ENCODE measurements at regions of chr3 and their contacts with region 1.

Region 1: GRCh38 chr3:196739671-196740480 is at the start of gene PAK2:
- DNase-seq: peak; percentile 72 to 93
- H3K4me3 ChIP-seq: peak within 1 kb of the TSS; percentile 85
- H3K27ac ChIP-seq: peak within 1 kb of the TSS; percentile 80
- H3K4me1 ChIP-seq: peaks cover 11% of the 10 kb centered on the region
- H3K27me3 ChIP-seq: no peaks in the 10 kb centered on the region
- CTCF ChIP-seq: no peak
- total RNA-seq, gene PAK2: 78.6 and 113 TPM in 2 replicates

Region 2: DNA sequence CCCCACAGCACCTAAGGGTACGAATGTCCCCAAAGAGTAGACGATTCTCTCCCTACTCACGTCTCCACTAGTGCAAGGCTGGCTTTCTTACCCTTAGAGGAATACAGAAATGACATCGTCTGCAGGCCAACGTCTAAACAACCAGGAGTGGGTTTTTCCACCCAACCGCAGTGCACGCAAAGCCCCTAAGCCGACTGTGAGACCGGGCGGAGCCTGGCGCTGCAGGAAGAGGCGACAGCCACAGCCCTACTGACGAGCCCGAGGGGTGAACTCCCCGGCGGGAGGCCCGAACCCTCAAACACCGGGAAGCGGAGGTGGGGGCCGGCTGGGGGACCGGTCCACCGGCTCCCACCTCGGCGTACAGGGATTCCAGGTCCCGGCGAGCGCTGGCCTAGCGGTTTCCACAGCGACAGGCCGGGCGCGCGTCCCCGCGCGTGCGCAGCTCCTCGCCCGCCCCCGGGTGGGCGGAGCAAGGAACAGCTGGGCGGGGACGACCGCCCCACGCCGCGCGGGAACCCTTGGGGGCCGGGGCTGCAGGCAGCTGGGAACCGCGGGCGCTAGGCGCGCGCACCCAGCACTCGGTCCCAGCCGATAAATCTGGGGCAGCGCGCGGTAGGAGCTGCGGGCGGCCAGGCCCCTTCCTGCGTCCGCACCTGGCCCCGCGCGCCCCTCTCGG is 27.9 kb before region 1 on chr3 and contains the starts of genes CEP19 and PIGX:
- CTCF ChIA-PET with region 1: interaction called, 12 read pairs
- POLR2A ChIA-PET with region 1: interaction called, 4 read pairs
- intact Hi-C with region 1: no loop called
- DNase-seq: peak; percentile 67 to 94
- H3K4me3 ChIP-seq: peak within 1 kb of the TSS; percentile 93
- H3K27ac ChIP-seq: peak within 1 kb of the TSS; percentile 43
- H3K4me1 ChIP-seq: peaks cover 18% of the 10 kb centered on the region
- H3K27me3 ChIP-seq: no peaks in the 10 kb centered on the region
- CTCF ChIP-seq: no peak
- total RNA-seq, gene CEP19: 3.4 and 5.5 TPM in 2 replicates
- total RNA-seq, gene PIGX: 47.6 and 52.9 TPM in 2 replicates

Region 3: DNA sequence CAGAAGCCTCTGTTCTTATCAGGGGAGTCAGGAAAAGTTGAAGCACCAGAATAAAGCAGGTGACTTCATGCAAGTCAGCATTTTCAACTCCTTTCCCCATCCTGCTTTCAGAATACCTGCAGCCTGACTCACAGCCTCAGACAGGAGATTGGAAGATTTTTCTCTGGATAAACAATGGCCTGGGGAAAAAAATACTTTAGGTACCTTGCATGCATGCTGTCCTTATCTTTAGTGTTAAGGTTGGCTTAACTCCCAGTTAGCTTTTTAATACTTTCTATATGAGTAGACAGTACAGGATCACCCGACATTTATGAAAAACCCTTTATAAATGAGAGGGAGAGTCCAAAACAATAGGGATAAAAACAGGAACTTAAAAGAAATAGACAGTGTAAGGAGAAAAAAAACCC is 53.4 kb after region 1 on chr3:
- CTCF ChIA-PET with region 1: no interaction called
- POLR2A ChIA-PET with region 1: no interaction called
- intact Hi-C with region 1: loop called (anchors 2 kb)
- DNase-seq: peak; percentile 80 to 100
- H3K4me3 ChIP-seq: peak overlapping the region; percentile 37; the same call in 1 of the 2 replicates
- H3K27ac ChIP-seq: peak overlapping the region; percentile 92
- H3K4me1 ChIP-seq: peaks cover 81% of the 10 kb centered on the region
- H3K27me3 ChIP-seq: no peaks in the 10 kb centered on the region
- CTCF ChIP-seq: no peak

Region 4: DNA sequence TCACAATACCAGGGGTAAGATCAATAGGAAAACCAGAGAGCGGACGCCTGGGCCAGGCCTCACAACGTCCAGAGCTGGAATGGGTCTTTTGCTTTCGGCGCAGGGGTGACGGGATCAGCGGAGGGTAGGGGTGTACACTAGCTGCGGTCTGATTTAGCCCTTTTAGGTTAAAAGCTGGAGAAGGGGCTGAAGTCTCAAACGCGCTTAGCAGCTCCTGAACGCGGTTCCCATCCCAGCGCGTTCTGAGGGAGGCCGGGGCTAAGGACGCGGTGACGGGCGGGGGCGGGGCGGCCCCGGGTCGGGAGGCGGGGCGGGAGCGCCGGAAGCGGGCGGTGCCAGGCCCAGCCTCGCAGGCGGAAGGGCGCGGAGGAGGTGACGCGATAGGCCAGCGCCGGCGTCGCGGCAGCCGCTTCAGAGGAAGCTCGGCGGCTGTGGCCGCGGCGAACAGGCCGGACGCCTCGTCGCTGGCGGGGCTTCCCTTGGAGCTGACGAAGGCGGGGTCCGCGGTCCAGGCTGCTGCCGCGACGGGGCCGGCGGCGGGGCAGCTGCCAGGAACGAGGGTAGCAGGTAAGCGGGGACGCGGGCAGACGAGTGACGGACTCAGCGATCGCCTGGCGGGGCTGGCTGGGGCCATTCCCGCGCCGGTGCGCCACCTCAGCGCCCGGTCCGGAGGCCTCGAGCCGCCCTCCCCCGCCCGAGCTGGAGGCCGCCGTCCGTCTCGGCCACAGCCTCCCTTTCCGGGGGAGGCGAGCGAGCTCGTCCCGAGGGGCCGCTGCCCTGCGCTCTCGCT is 127.8 kb after region 1 on chr3 and contains the start of gene SENP5:
- CTCF ChIA-PET with region 1: no interaction called
- POLR2A ChIA-PET with region 1: interaction called, 3 read pairs
- intact Hi-C with region 1: loop called (anchors 5 kb)
- DNase-seq: peak; percentile 80 to 94
- H3K4me3 ChIP-seq: peak within 1 kb of the TSS; percentile 95
- H3K27ac ChIP-seq: peak within 1 kb of the TSS; percentile 40
- H3K4me1 ChIP-seq: peaks cover 15% of the 10 kb centered on the region
- H3K27me3 ChIP-seq: no peaks in the 10 kb centered on the region
- CTCF ChIP-seq: no peak
- total RNA-seq, gene SENP5: 52.3 and 60.9 TPM in 2 replicates

Region 5: GRCh38 chr3:197305854-197306253 is 566.0 kb after region 1 on chr3:
- CTCF ChIA-PET with region 1: no interaction called
- POLR2A ChIA-PET with region 1: interaction called, 12 read pairs
- intact Hi-C with region 1: no loop called
- DNase-seq: no peak
- H3K4me3 ChIP-seq: no peak overlapping the region
- H3K27ac ChIP-seq: peak overlapping the region; percentile 88
- H3K4me1 ChIP-seq: peaks cover 71% of the 10 kb centered on the region
- H3K27me3 ChIP-seq: no peaks in the 10 kb centered on the region
- CTCF ChIP-seq: no peak

Measured in PC-9 (cell line).